ENCODE measurements at regions of chrX and their contacts with region 1.

Region 1: DNA sequence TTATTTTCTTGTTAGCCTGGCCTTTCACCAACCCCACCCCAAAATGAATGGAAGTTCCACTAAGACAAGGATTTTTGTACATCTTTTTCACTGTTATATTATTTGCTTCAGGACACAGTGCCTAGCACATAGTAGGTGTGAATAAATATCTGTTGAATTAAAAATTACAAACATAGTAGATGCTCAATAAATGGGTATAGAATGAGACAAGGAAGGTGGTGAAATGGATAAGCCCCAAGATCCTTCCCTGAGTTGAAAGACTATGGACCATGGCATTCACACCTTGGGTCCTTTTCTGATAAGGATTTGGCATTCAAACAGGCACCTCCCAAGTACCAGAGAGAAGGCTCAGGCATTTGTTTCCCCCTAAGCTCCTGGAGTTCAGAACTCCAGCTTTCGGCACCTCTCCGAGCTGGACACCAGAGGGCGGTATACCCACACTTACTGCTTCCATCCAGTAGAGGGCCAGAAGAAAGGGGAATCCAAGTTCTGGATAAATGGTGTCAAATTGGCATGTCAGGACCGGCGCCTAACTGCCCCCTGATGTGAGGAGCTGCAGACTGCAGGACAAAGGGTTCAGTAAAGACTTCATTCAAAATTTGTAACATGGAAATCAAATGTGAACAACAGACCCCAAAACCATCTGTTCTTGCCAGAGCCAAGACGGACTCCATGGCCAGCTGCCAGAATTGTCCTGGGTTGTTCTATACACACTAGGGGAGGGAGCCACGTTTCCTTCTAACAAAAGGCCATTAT is 193.0 kb downstream of the GPC3 start:
- DNase-seq: no peak
- ATAC-seq: peak; percentile 65
- H3K4me3 Mint-ChIP-seq: no peak overlapping the region
- H3K27ac Mint-ChIP-seq: no peak overlapping the region
- H3K4me1 Mint-ChIP-seq: peaks cover 8% of the 10 kb centered on the region
- H3K27me3 Mint-ChIP-seq: no peaks in the 10 kb centered on the region
- CTCF ChIP-seq: no peak

Region 2: GRCh38 chrX:133745349-133745748 is 47.0 kb before region 1 on chrX:
- CTCF ChIA-PET with region 1: interaction called, 10 read pairs
- POLR2A ChIA-PET with region 1: no interaction called
- intact Hi-C with region 1: no loop called
- DNase-seq: no peak
- ATAC-seq: peak; percentile 37
- H3K4me3 Mint-ChIP-seq: no peak overlapping the region
- H3K27ac Mint-ChIP-seq: no peak overlapping the region
- H3K4me1 Mint-ChIP-seq: peaks cover 3% of the 10 kb centered on the region
- H3K27me3 Mint-ChIP-seq: no peaks in the 10 kb centered on the region
- CTCF ChIP-seq: no peak

Region 3: DNA sequence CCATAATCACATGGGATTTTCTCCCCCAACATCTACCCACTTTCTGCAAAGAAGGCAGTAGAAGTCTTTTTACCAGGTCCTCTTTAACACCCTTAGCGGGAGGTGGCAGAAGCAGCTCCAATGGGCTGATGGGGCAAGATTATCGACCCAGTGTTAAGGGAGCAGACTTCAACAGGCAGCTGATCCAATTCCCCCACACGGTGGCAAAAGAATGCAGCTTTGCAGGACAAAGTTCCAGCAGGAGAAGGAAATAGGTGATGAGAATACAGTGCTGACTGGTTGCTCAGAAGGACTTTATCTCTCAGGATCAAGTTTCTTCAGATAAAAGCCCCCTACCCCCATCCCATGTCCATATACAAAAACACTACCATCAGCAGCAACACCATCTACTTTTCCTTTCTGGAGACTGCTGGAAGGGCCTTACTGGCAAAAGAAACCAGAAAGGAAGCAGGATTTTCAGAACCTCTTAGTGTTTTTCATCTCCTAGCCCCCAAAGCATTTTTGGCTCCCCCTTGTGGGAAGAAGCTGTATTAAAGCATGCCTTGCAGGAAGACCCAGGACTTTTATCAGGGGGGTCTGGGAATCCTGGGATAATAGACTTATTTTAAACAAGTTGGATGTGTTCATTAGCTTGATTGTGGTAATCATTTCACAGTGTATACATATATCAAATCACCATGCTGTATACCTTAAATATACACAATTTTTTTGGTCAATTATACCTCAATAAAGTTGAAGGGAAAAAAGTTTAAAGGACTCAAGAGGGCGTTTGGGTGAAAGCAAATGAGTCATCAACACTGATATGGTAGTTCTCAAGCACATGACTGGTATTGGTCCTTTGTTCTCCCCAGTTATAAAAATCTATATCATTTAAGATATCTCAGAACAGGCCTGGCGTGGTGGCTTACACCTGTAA is 46.6 kb after region 1 on chrX:
- CTCF ChIA-PET with region 1: interaction called, 18 read pairs
- POLR2A ChIA-PET with region 1: no interaction called
- intact Hi-C with region 1: loop called (anchors 1 kb)
- DNase-seq: no peak
- ATAC-seq: no peak
- H3K4me3 Mint-ChIP-seq: no peak overlapping the region
- H3K27ac Mint-ChIP-seq: peak overlapping the region; percentile 12
- H3K4me1 Mint-ChIP-seq: peaks cover 8% of the 10 kb centered on the region
- H3K27me3 Mint-ChIP-seq: no peaks in the 10 kb centered on the region
- CTCF ChIP-seq: no peak

Region 4: GRCh38 chrX:133859860-133860259 is 67.5 kb after region 1 on chrX:
- CTCF ChIA-PET with region 1: no interaction called
- POLR2A ChIA-PET with region 1: no interaction called
- intact Hi-C with region 1: no loop called
- DNase-seq: no peak
- ATAC-seq: no peak
- H3K4me3 Mint-ChIP-seq: no peak overlapping the region
- H3K27ac Mint-ChIP-seq: no peak overlapping the region
- H3K4me1 Mint-ChIP-seq: no peaks in the 10 kb centered on the region
- H3K27me3 Mint-ChIP-seq: no peaks in the 10 kb centered on the region
- CTCF ChIP-seq: no peak

Region 5: GRCh38 chrX:133921764-133922389 is 129.5 kb after region 1 on chrX:
- CTCF ChIA-PET with region 1: interaction called, 14 read pairs
- POLR2A ChIA-PET with region 1: no interaction called
- intact Hi-C with region 1: loop called (anchors 1 kb)
- DNase-seq: peak; percentile 15
- ATAC-seq: no peak
- H3K4me3 Mint-ChIP-seq: no peak overlapping the region
- H3K27ac Mint-ChIP-seq: no peak overlapping the region
- H3K4me1 Mint-ChIP-seq: peaks cover 9% of the 10 kb centered on the region
- H3K27me3 Mint-ChIP-seq: no peaks in the 10 kb centered on the region
- CTCF ChIP-seq: no peak

Region 6: DNA sequence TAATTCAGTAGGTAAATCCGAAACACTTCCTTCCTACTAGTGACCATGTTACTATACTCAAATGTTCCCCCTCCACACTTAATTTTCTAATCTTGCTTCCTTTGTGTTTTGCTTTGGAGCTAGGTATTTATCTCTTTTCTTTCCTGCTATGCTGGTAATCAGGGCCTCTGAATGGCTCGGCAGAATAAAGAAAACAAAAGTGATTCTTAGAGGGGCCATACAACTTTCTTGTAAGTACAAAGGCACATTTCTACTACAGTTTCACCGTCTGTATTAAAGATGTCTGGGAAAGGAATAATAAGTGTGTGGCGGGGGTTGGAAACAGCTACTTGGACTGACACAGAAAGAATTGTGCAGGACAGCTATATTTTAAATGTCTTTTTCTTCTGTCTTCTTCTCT is 142.7 kb after region 1 on chrX:
- CTCF ChIA-PET with region 1: no interaction called
- POLR2A ChIA-PET with region 1: no interaction called
- intact Hi-C with region 1: no loop called
- DNase-seq: no peak
- ATAC-seq: no peak
- H3K4me3 Mint-ChIP-seq: no peak overlapping the region
- H3K27ac Mint-ChIP-seq: no peak overlapping the region
- H3K4me1 Mint-ChIP-seq: no peaks in the 10 kb centered on the region
- H3K27me3 Mint-ChIP-seq: peaks cover 4% of the 10 kb centered on the region
- CTCF ChIP-seq: no peak

Region 7: DNA sequence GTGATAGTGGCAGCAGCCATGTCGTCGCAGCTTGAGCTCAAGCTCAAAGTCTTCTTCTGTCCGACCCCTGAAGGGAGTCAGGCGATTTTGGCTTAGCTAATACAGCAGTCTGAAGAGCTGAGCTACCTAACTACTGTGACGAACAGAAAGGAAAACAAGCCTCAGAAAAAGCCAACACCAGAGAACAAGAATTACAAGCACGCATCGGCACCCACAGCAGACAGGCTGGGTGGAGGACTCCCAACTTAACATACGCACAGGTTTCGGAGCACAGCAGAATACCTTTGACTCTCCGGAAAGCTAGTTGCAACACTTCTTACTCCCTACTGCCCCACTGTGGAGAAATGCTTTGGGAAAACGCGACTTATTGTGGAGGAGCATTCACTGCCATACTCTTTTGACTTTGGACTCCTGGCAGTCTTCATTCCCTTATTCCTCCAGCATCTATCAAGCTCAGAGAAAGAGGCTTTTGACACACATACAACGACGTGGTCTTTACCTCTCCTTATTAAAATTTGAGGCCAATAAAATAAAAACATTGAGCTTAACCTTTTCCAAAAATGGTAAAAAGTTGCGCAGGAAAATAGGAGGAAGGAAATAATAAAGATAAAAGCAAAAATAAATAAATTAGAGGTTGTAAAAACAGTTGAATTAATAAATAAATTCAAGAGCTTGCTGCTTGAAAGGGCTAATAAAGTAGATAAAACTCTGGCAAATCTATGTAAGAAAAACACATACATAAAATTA is 234.4 kb after region 1 on chrX:
- CTCF ChIA-PET with region 1: interaction called, 9 read pairs
- POLR2A ChIA-PET with region 1: no interaction called
- intact Hi-C with region 1: loop called (anchors 1 kb)
- DNase-seq: no peak
- ATAC-seq: no peak
- H3K4me3 Mint-ChIP-seq: no peak overlapping the region
- H3K27ac Mint-ChIP-seq: no peak overlapping the region
- H3K4me1 Mint-ChIP-seq: no peaks in the 10 kb centered on the region
- H3K27me3 Mint-ChIP-seq: peaks cover 6% of the 10 kb centered on the region
- CTCF ChIP-seq: no peak

Region 8: DNA sequence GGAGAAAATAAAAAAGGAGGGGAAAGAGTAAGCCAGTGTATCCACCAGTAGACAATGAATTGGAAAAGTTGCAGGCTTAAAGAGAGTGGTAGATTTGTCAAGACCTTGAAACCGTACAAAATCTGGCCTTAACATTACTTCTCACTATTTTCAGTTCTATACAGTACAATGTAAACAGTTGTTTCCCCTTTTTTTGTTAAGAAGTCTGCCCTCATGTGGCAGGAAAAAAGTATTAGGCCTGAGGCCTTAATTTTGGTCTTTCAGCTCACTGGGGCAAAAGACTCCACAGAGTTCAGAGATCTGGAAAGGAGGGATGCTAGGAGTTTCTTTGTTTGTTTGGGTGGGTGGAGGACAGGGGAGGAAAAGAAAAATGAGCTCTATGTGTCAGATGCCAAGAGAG is 351.9 kb after region 1 on chrX:
- CTCF ChIA-PET with region 1: interaction called, 11 read pairs
- POLR2A ChIA-PET with region 1: no interaction called
- intact Hi-C with region 1: loop called (anchors 1 kb)
- DNase-seq: no peak
- ATAC-seq: no peak
- H3K4me3 Mint-ChIP-seq: no peak overlapping the region
- H3K27ac Mint-ChIP-seq: no peak overlapping the region
- H3K4me1 Mint-ChIP-seq: no peaks in the 10 kb centered on the region
- H3K27me3 Mint-ChIP-seq: peaks cover 6% of the 10 kb centered on the region
- CTCF ChIP-seq: no peak

Region 9: DNA sequence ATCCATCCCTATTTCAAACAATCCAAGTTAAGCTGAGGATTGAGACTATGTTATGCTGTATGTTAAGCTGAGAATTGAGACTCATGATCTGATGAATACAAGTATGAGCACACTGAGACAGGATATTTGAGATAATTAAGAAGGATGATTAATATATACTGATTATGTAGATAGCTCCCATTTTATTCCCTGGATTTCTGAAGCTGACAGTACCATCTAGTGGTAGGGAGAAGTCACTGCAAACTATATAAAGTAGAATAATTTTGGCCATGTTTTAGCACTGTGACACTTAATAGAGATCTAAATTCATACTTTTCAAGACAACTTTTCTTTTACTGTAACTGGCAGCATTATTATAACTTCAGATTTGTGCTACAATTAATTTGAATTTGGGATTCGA is 603.8 kb after region 1 on chrX:
- CTCF ChIA-PET with region 1: interaction called, 14 read pairs
- POLR2A ChIA-PET with region 1: no interaction called
- intact Hi-C with region 1: loop called (anchors 5 kb)
- DNase-seq: no peak
- ATAC-seq: no peak
- H3K4me3 Mint-ChIP-seq: no peak overlapping the region
- H3K27ac Mint-ChIP-seq: no peak overlapping the region
- H3K4me1 Mint-ChIP-seq: no peaks in the 10 kb centered on the region
- H3K27me3 Mint-ChIP-seq: no peaks in the 10 kb centered on the region
- CTCF ChIP-seq: no peak